Activated naive CD4-positive, alpha-beta T cell treated with anti-CD3 and anti-CD28 coated beads for 36 hours (primary cell): ENCODE measurements at regions of chr5 and their contacts with region 1.

Region 1: DNA sequence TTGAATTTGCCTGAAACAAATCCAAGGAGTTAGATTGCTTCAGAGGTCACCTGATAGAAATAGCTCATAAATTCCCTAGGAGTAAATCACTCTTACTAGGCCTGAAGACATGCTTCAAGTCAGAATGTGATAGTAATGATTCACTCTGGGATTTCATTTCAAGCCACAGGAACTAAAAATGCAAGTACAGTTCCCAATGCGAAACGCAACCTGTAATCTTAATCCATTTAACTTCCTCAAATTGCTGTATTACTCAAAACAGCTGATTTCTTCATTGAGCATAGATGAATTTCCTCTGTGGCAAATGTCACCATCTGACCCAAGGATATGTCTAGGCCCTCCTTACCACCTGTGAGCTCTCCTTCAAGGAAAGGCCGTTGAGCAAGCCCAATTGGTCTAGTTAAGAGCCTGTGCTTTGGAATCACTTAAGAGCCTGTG is 32.1 kb upstream of the IL6ST start:
- DNase-seq: peak; percentile 42
- H3K4me3 Mint-ChIP-seq: no peak overlapping the region
- H3K27ac Mint-ChIP-seq: no peak overlapping the region
- H3K4me1 Mint-ChIP-seq: peaks cover 30% of the 10 kb centered on the region
- H3K27me3 Mint-ChIP-seq: no peaks in the 10 kb centered on the region

Region 2: GRCh38 chr5:55691265-55692105 is 335.4 kb before region 1 on chr5:
- CTCF ChIA-PET with region 1: no interaction called
- intact Hi-C with region 1: no loop called
- DNase-seq: no peak
- H3K4me3 Mint-ChIP-seq: no peak overlapping the region
- H3K27ac Mint-ChIP-seq: no peak overlapping the region
- H3K4me1 Mint-ChIP-seq: peaks cover 3% of the 10 kb centered on the region
- H3K27me3 Mint-ChIP-seq: no peaks in the 10 kb centered on the region

Region 3: GRCh38 chr5:56012281-56012963 is 14.5 kb before region 1 on chr5:
- CTCF ChIA-PET with region 1: interaction called, 5 read pairs
- intact Hi-C with region 1: loop called (anchors 1 kb)
- DNase-seq: peak; percentile 66
- H3K4me3 Mint-ChIP-seq: peak overlapping the region; percentile 33
- H3K27ac Mint-ChIP-seq: peak overlapping the region; percentile 77
- H3K4me1 Mint-ChIP-seq: peaks cover 41% of the 10 kb centered on the region
- H3K27me3 Mint-ChIP-seq: no peaks in the 10 kb centered on the region

Region 4: GRCh38 chr5:56037531-56038010 is 10.7 kb after region 1 on chr5:
- CTCF ChIA-PET with region 1: interaction called, 3 read pairs
- intact Hi-C with region 1: loop called (anchors 1 kb)
- DNase-seq: no peak
- H3K4me3 Mint-ChIP-seq: no peak overlapping the region
- H3K27ac Mint-ChIP-seq: no peak overlapping the region
- H3K4me1 Mint-ChIP-seq: peaks cover 9% of the 10 kb centered on the region
- H3K27me3 Mint-ChIP-seq: no peaks in the 10 kb centered on the region

Region 5: GRCh38 chr5:56045469-56045868 is 18.6 kb after region 1 on chr5:
- CTCF ChIA-PET with region 1: interaction called, 3 read pairs
- intact Hi-C with region 1: loop called (anchors 2 kb)
- DNase-seq: no peak
- H3K4me3 Mint-ChIP-seq: no peak overlapping the region
- H3K27ac Mint-ChIP-seq: no peak overlapping the region
- H3K4me1 Mint-ChIP-seq: peaks cover 47% of the 10 kb centered on the region
- H3K27me3 Mint-ChIP-seq: no peaks in the 10 kb centered on the region

Region 6: DNA sequence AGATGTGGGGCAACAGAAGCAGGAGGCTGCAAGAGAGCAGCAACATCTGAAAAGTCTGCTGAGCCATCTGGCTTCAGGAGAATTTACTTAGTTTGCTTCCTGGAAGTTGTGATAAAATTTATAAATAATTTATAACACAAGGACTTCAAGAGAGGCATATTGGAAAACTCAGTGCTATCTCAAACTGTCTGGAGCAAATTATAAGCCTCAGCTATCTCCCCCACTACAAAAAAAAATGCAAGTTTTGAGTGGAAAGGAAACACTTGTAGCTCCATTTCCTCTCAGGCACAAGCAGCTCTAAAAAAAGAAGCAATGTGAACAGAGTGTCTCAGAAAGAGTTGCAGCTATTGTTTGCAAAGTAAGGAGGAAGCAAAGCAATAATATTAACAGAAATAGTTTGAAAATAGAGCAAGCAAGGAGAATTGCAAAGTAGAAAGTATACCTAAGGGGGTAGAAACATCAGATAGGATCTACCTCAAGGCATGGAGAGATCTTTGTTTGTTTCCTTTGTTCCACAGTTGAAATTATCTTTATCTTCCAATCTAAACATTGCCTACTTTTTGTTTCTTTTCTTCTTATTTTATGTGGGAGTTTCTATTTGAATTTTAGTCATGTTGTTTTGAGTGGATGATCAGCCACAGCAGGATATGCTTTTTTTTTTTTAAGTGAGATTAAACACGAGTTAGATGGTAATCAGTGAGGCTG is 23.8 kb after region 1 on chr5:
- CTCF ChIA-PET with region 1: interaction called, 3 read pairs
- intact Hi-C with region 1: loop called (anchors 1 kb)
- DNase-seq: no peak
- H3K4me3 Mint-ChIP-seq: peak overlapping the region; percentile 10
- H3K27ac Mint-ChIP-seq: peak overlapping the region; percentile 52
- H3K4me1 Mint-ChIP-seq: peaks cover 61% of the 10 kb centered on the region
- H3K27me3 Mint-ChIP-seq: no peaks in the 10 kb centered on the region

Region 7: DNA sequence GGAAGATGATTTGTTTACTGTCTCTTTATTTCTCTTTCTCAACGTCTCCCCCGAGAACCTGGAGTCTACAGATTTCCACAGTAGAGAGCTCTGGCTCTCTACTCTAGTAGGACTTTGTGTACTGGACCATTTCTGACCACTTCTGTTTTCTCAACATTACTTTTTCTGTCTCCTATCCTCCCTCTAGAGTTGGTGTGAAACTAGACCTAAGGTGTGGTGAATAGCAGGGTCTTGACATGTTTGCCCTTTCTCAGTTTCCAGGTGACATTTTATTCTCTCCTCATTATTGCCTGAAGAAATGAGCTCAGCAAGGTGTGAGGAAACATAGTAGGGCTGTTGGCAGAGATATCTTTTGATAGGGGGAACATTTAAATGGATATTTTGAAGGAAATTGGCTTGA is 30.0 kb after region 1 on chr5:
- CTCF ChIA-PET with region 1: interaction called, 3 read pairs
- intact Hi-C with region 1: loop called (anchors 1 kb)
- DNase-seq: no peak
- H3K4me3 Mint-ChIP-seq: peak overlapping the region; percentile 56
- H3K27ac Mint-ChIP-seq: peak overlapping the region; percentile 81
- H3K4me1 Mint-ChIP-seq: peaks cover 73% of the 10 kb centered on the region
- H3K27me3 Mint-ChIP-seq: no peaks in the 10 kb centered on the region

Region 8: DNA sequence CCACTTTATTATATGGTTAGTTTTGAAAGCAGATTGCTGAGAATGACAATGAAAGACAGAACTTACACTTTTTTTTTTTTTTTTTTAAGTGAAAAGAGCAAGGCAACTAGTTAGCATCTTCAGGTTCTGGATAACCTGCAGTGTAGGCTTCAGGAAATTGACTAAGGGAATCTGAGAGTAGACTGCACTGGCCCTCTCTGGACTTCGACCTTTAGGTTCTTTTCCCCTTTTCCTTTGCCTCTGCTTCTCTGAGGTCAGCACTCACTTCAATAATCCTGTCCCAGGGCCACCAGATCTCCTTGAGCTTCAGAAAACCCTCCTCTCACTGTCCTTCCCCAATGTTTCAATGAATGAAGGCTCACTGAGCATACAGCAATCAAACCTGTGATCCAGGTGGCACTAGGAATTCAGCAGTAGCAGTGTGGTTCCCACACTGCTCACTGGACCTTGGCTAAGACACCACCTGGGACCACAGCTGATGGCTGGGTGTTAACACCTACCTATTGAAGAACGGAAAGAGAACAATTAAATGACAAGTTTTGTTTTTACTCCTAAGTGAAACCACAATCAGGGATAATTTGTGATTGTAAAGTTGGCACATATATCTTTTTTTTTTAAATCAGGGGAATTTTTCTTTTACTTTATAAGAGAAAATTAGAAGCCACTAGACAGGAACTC is 53.6 kb after region 1 on chr5:
- CTCF ChIA-PET with region 1: no interaction called
- intact Hi-C with region 1: loop called (anchors 1 kb)
- DNase-seq: peak; percentile 72
- H3K4me3 Mint-ChIP-seq: peak overlapping the region; percentile 5
- H3K27ac Mint-ChIP-seq: peak overlapping the region; percentile 90
- H3K4me1 Mint-ChIP-seq: peaks cover 72% of the 10 kb centered on the region
- H3K27me3 Mint-ChIP-seq: no peaks in the 10 kb centered on the region